ENCODE measurements at regions of chr1 and their contacts with region 1.

Region 1: GRCh38 chr1:153494976-153495535 is 34.6 kb upstream of the S100A7 start:
- DNase-seq: peak; percentile 50 to 72
- ATAC-seq: peak; percentile 54 to 88; a peak in 4 of 6 replicates
- H3K4me3 ChIP-seq: no peak overlapping the region
- H3K27ac ChIP-seq: peak overlapping the region in 1 of 2 experiments; percentile 32; a peak in 2 of 6 replicates
- H3K4me1 ChIP-seq: peaks cover 18% of the 10 kb centered on the region
- CTCF ChIP-seq: peak; percentile 90
- EP300 ChIP-seq: no peak
- POLR2A ChIP-seq: no peak
- RAD21 ChIP-seq: peak; percentile 93 to 94

Region 2: GRCh38 chr1:153337980-153338853 is 156.8 kb before region 1 on chr1:
- CTCF ChIA-PET with region 1: interaction called, 31 read pairs
- POLR2A ChIA-PET with region 1: no interaction called
- DNase-seq: no peak
- ATAC-seq: no peak
- H3K4me3 ChIP-seq: no peak overlapping the region
- H3K27ac ChIP-seq: no peak overlapping the region
- H3K4me1 ChIP-seq: no peaks in the 10 kb centered on the region
- CTCF ChIP-seq: no peak
- EP300 ChIP-seq: no peak
- POLR2A ChIP-seq: no peak
- RAD21 ChIP-seq: no peak

Region 3: GRCh38 chr1:153352523-153352922 is 142.5 kb before region 1 on chr1:
- CTCF ChIA-PET with region 1: interaction called, 731 read pairs
- POLR2A ChIA-PET with region 1: no interaction called
- DNase-seq: peak; percentile 69 to 77
- ATAC-seq: peak; percentile 60 to 76; a peak in 5 of 6 replicates
- H3K4me3 ChIP-seq: no peak overlapping the region
- H3K27ac ChIP-seq: no peak overlapping the region
- H3K4me1 ChIP-seq: no peaks in the 10 kb centered on the region
- CTCF ChIP-seq: peak; percentile 94
- EP300 ChIP-seq: no peak
- POLR2A ChIP-seq: no peak
- RAD21 ChIP-seq: peak; percentile 90 to 92

Region 4: DNA sequence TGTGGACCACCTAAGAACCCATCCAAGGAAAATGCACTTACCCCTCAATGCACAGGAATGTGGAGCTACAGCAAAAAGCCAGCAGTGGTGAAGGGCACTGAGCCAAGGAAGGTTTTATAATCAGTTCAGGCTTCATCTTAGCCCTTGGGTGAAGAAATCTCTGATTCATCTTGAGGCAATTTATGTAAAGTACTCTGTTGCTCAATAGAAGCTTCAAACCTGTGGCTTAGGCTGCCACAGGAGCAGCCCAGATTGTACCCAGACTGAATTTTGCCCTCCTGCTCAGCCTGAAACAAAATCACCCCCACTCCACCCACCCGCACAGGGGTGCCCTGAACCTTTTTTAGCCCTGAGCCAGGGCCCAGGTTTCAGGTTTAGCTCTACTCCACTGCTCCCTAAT is 119.5 kb before region 1 on chr1 and contains the start of gene S100A12:
- CTCF ChIA-PET with region 1: interaction called, 15 read pairs
- POLR2A ChIA-PET with region 1: interaction called, 4 read pairs
- DNase-seq: peak in 1 of 2 experiments; percentile 13
- ATAC-seq: peak; percentile 74 to 79
- H3K4me3 ChIP-seq: no peak within 1 kb of the TSS
- H3K27ac ChIP-seq: peak within 1 kb of the TSS in 1 of 2 experiments; percentile 33; a peak in 2 of 6 replicates
- H3K4me1 ChIP-seq: peaks cover 5% of the 10 kb centered on the region; the same call in 1 of the 3 replicates
- CTCF ChIP-seq: no peak
- EP300 ChIP-seq: no peak
- POLR2A ChIP-seq: no peak
- RAD21 ChIP-seq: no peak
- polyA plus RNA-seq, gene S100A12: not detected in 2 replicates

Region 5: GRCh38 chr1:153422450-153423068 is 72.5 kb before region 1 on chr1:
- CTCF ChIA-PET with region 1: interaction called, 12 read pairs
- POLR2A ChIA-PET with region 1: no interaction called
- DNase-seq: peak; percentile 45 to 48
- ATAC-seq: peak; percentile 67 to 75; a peak in 5 of 6 replicates
- H3K4me3 ChIP-seq: no peak overlapping the region
- H3K27ac ChIP-seq: no peak overlapping the region
- H3K4me1 ChIP-seq: no peaks in the 10 kb centered on the region
- CTCF ChIP-seq: no peak
- EP300 ChIP-seq: no peak
- POLR2A ChIP-seq: no peak
- RAD21 ChIP-seq: no peak

Region 6: GRCh38 chr1:153465811-153466636 is 29.0 kb before region 1 on chr1:
- CTCF ChIA-PET with region 1: interaction called, 128 read pairs
- POLR2A ChIA-PET with region 1: no interaction called
- DNase-seq: peak; percentile 58 to 75
- ATAC-seq: peak; percentile 76 to 94; a peak in 5 of 6 replicates
- H3K4me3 ChIP-seq: no peak overlapping the region
- H3K27ac ChIP-seq: no peak overlapping the region
- H3K4me1 ChIP-seq: no peaks in the 10 kb centered on the region
- CTCF ChIP-seq: peak; percentile 86
- EP300 ChIP-seq: no peak
- POLR2A ChIP-seq: no peak
- RAD21 ChIP-seq: peak; percentile 54 to 58

Region 7: DNA sequence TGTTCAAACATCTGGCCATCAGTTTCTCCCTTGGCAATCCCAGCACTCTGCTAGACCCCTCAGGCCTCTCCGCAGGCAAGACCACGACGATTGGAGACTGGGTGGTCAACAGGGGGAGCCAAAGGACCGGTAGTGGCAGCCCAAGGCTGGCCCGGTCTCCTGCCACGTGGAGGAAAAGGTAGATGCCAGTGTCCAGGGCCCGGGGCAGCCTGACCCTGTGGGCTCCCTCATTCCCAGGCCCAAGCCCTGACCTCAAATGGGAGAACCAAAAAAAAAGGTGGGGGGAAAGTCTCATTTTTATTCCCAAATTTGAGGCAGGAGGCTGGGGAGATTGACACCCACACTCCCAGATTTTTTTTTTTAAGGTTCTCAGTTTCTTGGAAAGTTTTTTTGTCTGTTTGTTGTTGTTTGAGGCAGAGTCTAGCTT is 15.9 kb after region 1 on chr1:
- CTCF ChIA-PET with region 1: interaction called, 99 read pairs
- POLR2A ChIA-PET with region 1: no interaction called
- DNase-seq: peak; percentile 84 to 88
- ATAC-seq: peak; percentile 73 to 85
- H3K4me3 ChIP-seq: no peak overlapping the region
- H3K27ac ChIP-seq: peak overlapping the region; percentile 72 to 87
- H3K4me1 ChIP-seq: peaks cover 43% of the 10 kb centered on the region
- CTCF ChIP-seq: peak; percentile 94
- EP300 ChIP-seq: no peak
- POLR2A ChIP-seq: no peak
- RAD21 ChIP-seq: peak; percentile 99 to 100

Measured in A549 (cell line).